B cell (primary cell): ENCODE measurements at regions of chr11 and their contacts with region 1.

Region 1: GRCh38 chr11:134050541-134051383 is 18.1 kb upstream of the JAM3 start:
- DNase-seq: peak; percentile 84
- ATAC-seq: peak; percentile 98
- H3K4me3 ChIP-seq: no peak overlapping the region
- H3K4me3 Mint-ChIP-seq: no peak overlapping the region
- H3K27ac ChIP-seq: no peak overlapping the region
- H3K27ac Mint-ChIP-seq: no peak overlapping the region
- H3K4me1 ChIP-seq: peaks cover 4 to 7% of the 10 kb centered on the region in 2 donors
- H3K4me1 Mint-ChIP-seq: peaks cover 2% of the 10 kb centered on the region
- H3K27me3 ChIP-seq: peaks cover 0 to 23% (median 5%) of the 10 kb centered on the region in 4 experiments
- H3K27me3 Mint-ChIP-seq: peaks cover 33% of the 10 kb centered on the region
- CTCF ChIP-seq: peak; percentile 90

Region 2: GRCh38 chr11:134037046-134037908 is 13.5 kb before region 1 on chr11:
- CTCF ChIA-PET with region 1: interaction called, 15 read pairs
- POLR2A ChIA-PET with region 1: no interaction called
- intact Hi-C with region 1: no loop called
- DNase-seq: peak; percentile 54
- ATAC-seq: peak; percentile 73
- H3K4me3 ChIP-seq: peak overlapping the region; percentile 17 to 79 (median 68)
- H3K4me3 Mint-ChIP-seq: peak overlapping the region; percentile 94
- H3K27ac ChIP-seq: peak overlapping the region; percentile 34 to 84
- H3K27ac Mint-ChIP-seq: peak overlapping the region; percentile 89
- H3K4me1 ChIP-seq: peaks cover 12 to 21% of the 10 kb centered on the region in 2 donors
- H3K4me1 Mint-ChIP-seq: peaks cover 22% of the 10 kb centered on the region
- H3K27me3 ChIP-seq: peaks cover 0 to 22% (median 3%) of the 10 kb centered on the region in 4 experiments
- H3K27me3 Mint-ChIP-seq: peaks cover 9% of the 10 kb centered on the region
- CTCF ChIP-seq: no peak

Region 3: DNA sequence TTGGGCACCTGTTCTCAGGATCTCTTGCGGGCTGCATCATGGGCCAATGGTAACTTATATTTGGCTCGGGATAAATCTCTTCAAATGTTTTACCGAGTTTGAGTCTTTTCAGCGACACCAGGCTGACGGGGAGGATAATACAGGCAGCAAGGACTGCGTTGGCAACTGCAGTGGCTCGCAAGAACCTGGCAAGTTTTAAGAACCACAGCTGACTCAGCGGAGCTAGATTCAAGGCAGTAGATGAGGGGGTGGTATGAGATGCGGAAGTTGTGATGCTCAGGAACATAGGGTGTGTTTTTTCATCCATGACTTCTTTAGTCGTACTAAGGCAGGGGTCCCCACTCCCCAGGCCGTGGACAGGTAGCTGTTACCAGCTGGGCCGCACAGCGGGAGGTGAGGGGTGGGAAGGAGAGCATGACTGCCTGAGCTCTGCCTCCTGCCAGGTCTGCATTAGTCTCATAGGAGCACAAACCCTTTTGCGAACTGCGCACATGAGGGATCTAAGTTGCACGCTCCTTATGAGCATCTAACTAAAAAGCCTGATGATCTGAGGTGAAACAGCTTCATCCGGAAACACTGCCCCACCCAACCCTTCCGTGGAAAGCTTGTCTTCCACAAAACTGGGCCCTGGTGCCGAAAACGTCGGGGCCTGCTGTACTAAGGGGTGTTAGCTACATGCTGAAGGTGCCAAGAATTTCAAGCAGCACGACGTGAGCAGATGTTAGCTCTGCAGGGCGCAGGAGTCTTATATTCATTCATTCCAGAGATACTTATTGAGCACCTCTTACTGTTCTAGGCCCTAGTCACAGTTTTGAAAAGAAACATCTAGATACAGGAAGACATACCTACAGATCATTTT is 11.7 kb after region 1 on chr11:
- CTCF ChIA-PET with region 1: interaction called, 21 read pairs
- POLR2A ChIA-PET with region 1: no interaction called
- intact Hi-C with region 1: no loop called
- DNase-seq: no peak
- ATAC-seq: no peak
- H3K4me3 ChIP-seq: no peak overlapping the region
- H3K4me3 Mint-ChIP-seq: no peak overlapping the region
- H3K27ac ChIP-seq: no peak overlapping the region
- H3K27ac Mint-ChIP-seq: no peak overlapping the region
- H3K4me1 ChIP-seq: no peaks in the 10 kb centered on the region
- H3K4me1 Mint-ChIP-seq: no peaks in the 10 kb centered on the region
- H3K27me3 ChIP-seq: peaks cover 0 to 11% (median 7%) of the 10 kb centered on the region in 4 experiments
- H3K27me3 Mint-ChIP-seq: peaks cover 52% of the 10 kb centered on the region
- CTCF ChIP-seq: no peak

Region 4: DNA sequence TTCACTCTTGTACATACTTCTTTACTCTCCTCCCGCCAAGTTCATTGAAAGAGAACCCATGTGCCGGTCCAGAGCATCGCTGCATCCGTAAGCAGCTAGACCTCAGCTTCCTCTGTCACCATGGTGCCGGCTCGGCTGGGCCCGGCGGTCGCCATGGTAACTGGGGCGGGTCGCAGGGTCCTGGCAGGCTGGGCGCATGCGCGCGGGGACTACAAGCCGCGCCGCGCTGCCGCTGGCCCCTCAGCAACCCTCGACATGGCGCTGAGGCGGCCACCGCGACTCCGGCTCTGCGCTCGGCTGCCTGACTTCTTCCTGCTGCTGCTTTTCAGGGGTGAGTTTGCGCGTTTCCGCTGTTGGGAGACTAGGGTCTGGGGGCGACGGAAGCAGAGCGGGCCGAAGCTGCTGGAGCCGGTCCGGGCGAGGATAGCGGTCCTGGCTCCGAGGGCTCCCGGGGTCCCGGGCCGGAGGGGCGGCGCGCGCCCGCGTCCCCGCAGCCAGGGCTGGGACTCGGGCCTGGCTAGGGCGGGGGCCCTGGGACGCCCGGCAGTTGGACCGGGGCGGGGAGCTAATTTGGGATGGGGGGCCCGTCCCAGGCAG is 18.2 kb after region 1 on chr11 and contains the start of gene JAM3:
- CTCF ChIA-PET with region 1: interaction called, 21 read pairs
- POLR2A ChIA-PET with region 1: no interaction called
- intact Hi-C with region 1: loop called (anchors 2 kb)
- DNase-seq: peak; percentile 98
- ATAC-seq: peak; percentile 85
- H3K4me3 ChIP-seq: peak within 1 kb of the TSS in 4 of 5 experiments; percentile 40 to 75 (median 66)
- H3K4me3 Mint-ChIP-seq: peak within 1 kb of the TSS; percentile 92
- H3K27ac ChIP-seq: peak within 1 kb of the TSS in 1 of 2 donors; percentile 78
- H3K27ac Mint-ChIP-seq: peak within 1 kb of the TSS; percentile 90
- H3K4me1 ChIP-seq: peaks cover 21 to 32% of the 10 kb centered on the region in 2 donors
- H3K4me1 Mint-ChIP-seq: peaks cover 42% of the 10 kb centered on the region
- H3K27me3 ChIP-seq: no peaks in the 10 kb centered on the region
- H3K27me3 Mint-ChIP-seq: peaks cover 13% of the 10 kb centered on the region
- CTCF ChIP-seq: no peak
- total RNA-seq, gene JAM3: 28.0 and 29.6 TPM in 2 replicates

Region 5: GRCh38 chr11:134079317-134079716 is 28.6 kb after region 1 on chr11:
- CTCF ChIA-PET with region 1: interaction called, 14 read pairs
- POLR2A ChIA-PET with region 1: no interaction called
- intact Hi-C with region 1: no loop called
- DNase-seq: no peak
- ATAC-seq: no peak
- H3K4me3 ChIP-seq: no peak overlapping the region
- H3K4me3 Mint-ChIP-seq: no peak overlapping the region
- H3K27ac ChIP-seq: no peak overlapping the region
- H3K27ac Mint-ChIP-seq: no peak overlapping the region
- H3K4me1 ChIP-seq: no peaks in the 10 kb centered on the region
- H3K4me1 Mint-ChIP-seq: peaks cover 14% of the 10 kb centered on the region
- H3K27me3 ChIP-seq: no peaks in the 10 kb centered on the region
- H3K27me3 Mint-ChIP-seq: peaks cover 3% of the 10 kb centered on the region
- CTCF ChIP-seq: no peak

Region 6: DNA sequence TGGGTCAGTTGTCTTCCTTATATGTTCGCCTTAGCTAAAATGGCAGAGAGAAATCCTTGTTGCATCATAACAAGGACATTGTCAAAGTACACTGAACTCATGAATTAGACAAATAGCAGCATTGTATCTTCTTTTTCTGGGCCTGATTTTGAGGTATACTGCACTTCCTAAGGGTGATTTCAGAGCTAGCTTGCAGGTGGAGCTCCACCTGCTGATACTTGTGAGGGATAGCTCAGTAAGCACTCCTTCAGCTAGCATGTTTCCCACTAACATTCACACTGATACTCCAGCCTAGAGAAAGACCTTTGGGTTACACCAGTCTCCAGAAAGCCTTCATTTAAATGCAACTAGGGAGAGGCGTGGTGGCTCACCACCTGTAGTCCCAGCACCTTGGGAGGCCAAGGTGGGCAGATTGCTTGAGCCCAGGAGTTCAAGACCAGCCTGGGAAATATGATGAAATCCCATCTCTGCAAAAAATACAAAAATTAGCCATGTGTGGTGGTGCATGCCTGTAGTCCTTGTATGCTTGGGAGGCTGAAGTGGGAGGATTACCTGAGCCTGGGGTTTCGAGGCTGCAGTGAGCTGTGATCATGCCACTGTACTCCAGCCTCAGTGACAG is 47.9 kb after region 1 on chr11:
- CTCF ChIA-PET with region 1: interaction called, 47 read pairs
- POLR2A ChIA-PET with region 1: no interaction called
- intact Hi-C with region 1: loop called (anchors 1 kb)
- DNase-seq: peak; percentile 31
- ATAC-seq: no peak
- H3K4me3 ChIP-seq: no peak overlapping the region
- H3K4me3 Mint-ChIP-seq: no peak overlapping the region
- H3K27ac ChIP-seq: no peak overlapping the region
- H3K27ac Mint-ChIP-seq: no peak overlapping the region
- H3K4me1 ChIP-seq: no peaks in the 10 kb centered on the region
- H3K4me1 Mint-ChIP-seq: peaks cover 13% of the 10 kb centered on the region
- H3K27me3 ChIP-seq: no peaks in the 10 kb centered on the region
- H3K27me3 Mint-ChIP-seq: no peaks in the 10 kb centered on the region
- CTCF ChIP-seq: peak; percentile 14

Region 7: GRCh38 chr11:134139873-134140331 is 89.1 kb after region 1 on chr11:
- CTCF ChIA-PET with region 1: interaction called, 68 read pairs
- POLR2A ChIA-PET with region 1: no interaction called
- intact Hi-C with region 1: loop called (anchors 1 kb)
- DNase-seq: peak; percentile 73
- ATAC-seq: peak; percentile 64
- H3K4me3 ChIP-seq: no peak overlapping the region
- H3K4me3 Mint-ChIP-seq: no peak overlapping the region
- H3K27ac ChIP-seq: no peak overlapping the region
- H3K27ac Mint-ChIP-seq: no peak overlapping the region
- H3K4me1 ChIP-seq: no peaks in the 10 kb centered on the region
- H3K4me1 Mint-ChIP-seq: no peaks in the 10 kb centered on the region
- H3K27me3 ChIP-seq: no peaks in the 10 kb centered on the region
- H3K27me3 Mint-ChIP-seq: no peaks in the 10 kb centered on the region
- CTCF ChIP-seq: peak; percentile 84